Aorta (tissue), 5 donors: ENCODE measurements at regions of chr15 and their contacts with region 1.

Region 1: DNA sequence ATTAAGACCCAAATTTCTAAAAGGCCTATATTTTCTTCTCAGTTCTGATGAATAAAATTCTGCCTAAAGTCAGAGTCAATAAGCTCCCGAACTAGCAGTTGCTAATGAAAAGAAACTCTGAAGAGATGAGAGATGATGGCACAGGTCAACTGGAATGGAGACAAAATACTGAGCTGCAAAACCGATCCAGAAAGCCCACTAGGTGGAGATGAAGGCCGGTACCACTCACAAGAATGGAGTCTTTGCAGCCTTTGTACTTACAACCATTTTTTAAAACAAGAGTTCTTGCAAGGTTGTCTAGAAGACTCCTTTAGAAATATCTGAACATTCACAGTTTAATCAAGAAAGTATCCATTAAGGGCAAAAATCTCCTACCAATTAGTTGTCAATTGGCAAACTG is 119.9 kb upstream of the TJP1 start:
- DNase-seq: no peak
- ATAC-seq: no peak
- H3K4me3 ChIP-seq: no peak overlapping the region
- H3K27ac ChIP-seq: no peak overlapping the region
- H3K4me1 ChIP-seq: no peaks in the 10 kb centered on the region
- H3K27me3 ChIP-seq: no peaks in the 10 kb centered on the region

Region 2: GRCh38 chr15:29926083-29926388 is 16.1 kb before region 1 on chr15:
- intact Hi-C with region 1: no loop called
- DNase-seq: no peak
- ATAC-seq: no peak
- H3K4me3 ChIP-seq: no peak overlapping the region
- H3K27ac ChIP-seq: no peak overlapping the region
- H3K4me1 ChIP-seq: peaks cover 2 to 5% of the 10 kb centered on the region in 2 donors
- H3K27me3 ChIP-seq: no peaks in the 10 kb centered on the region

Region 3: DNA sequence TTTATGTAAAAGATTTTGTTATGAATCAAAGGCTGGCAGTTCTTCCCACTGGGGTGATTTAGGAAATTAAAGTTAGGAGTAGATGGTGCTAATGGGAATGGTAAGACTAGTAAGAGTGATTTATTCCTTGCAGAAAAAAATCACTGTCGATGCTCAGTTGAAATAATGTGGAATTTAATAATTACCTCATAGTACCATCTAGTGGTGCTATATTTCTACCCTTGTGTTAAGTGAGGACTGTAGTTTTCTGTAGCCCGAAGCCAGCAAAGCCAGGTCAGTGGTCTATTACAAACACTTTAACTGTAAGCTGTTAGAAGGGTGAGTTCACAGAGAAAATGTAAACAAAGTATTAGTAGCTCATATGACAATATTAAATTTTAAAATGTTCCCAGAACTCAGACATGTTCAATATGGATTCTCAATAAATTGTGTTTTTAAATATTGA is 101.1 kb after region 1 on chr15:
- intact Hi-C with region 1: loop called in 1 of 2 experiments (anchors 10 kb)
- DNase-seq: no peak
- ATAC-seq: no peak
- H3K4me3 ChIP-seq: no peak overlapping the region
- H3K27ac ChIP-seq: no peak overlapping the region
- H3K4me1 ChIP-seq: no peaks in the 10 kb centered on the region
- H3K27me3 ChIP-seq: no peaks in the 10 kb centered on the region